Ascending aorta (tissue), 2 donors: ENCODE measurements at regions of chr19 and their contacts with region 1.

Region 1: DNA sequence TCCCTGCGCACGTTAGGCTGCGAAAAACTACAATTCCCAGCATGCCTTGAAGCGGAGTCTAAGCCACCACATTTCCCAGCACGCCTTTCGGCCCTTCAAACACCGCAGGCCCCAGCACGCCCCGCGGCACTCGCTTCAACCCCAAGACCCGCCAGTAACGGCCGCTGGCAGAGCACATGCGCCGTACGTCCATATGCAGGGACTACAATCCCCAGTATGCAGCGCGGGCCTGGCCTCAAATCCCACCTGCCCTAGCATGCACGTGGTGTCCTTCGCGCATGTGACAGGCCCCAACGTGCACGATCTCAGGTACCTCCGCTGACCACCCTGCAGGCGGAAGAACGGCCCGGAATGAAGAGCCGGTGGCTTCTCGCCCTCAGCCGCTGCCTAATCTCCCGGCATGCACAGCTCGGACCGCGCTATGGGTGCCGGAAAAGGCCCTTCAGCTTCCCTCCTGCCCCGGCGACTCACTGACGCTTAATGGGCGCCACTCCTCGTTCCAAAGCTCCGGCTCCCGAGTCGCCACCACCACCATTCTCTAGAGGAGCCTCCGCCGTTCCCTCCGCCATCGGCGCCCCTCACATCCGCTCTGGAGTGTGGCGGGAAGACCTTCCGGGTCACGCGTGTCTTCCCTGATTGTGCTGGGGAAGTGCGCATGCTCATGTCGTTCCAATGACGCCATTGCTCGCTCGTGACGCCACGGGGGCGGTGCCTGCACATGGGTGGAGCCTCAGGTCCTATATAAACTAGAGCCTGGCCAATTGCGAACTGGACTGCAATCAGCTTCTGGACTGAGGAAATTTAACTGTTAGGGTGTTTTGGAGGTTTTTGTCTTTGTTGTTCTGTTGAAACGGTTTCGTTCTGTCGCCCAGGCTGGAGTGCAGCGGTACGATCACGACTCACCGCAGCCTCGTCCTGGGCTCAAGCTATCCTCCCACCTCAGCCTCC is at the start of gene DUS3L:
- DNase-seq: peak; percentile 89 to 99
- H3K4me3 ChIP-seq: peak within 1 kb of the TSS; percentile 63 to 77
- H3K27ac ChIP-seq: peak within 1 kb of the TSS; percentile 86 to 97
- H3K4me1 ChIP-seq: peaks cover 3 to 5% of the 10 kb centered on the region in 2 donors
- H3K27me3 ChIP-seq: no peaks in the 10 kb centered on the region
- CTCF ChIP-seq: no peak
- total RNA-seq, gene DUS3L: 13.1 TPM

Region 2: GRCh38 chr19:5466814-5467291 is 324.0 kb before region 1 on chr19:
- intact Hi-C with region 1: no loop called
- DNase-seq: no peak
- H3K4me3 ChIP-seq: no peak overlapping the region
- H3K27ac ChIP-seq: no peak overlapping the region
- H3K4me1 ChIP-seq: no peaks in the 10 kb centered on the region
- H3K27me3 ChIP-seq: no peaks in the 10 kb centered on the region
- CTCF ChIP-seq: no peak

Region 3: DNA sequence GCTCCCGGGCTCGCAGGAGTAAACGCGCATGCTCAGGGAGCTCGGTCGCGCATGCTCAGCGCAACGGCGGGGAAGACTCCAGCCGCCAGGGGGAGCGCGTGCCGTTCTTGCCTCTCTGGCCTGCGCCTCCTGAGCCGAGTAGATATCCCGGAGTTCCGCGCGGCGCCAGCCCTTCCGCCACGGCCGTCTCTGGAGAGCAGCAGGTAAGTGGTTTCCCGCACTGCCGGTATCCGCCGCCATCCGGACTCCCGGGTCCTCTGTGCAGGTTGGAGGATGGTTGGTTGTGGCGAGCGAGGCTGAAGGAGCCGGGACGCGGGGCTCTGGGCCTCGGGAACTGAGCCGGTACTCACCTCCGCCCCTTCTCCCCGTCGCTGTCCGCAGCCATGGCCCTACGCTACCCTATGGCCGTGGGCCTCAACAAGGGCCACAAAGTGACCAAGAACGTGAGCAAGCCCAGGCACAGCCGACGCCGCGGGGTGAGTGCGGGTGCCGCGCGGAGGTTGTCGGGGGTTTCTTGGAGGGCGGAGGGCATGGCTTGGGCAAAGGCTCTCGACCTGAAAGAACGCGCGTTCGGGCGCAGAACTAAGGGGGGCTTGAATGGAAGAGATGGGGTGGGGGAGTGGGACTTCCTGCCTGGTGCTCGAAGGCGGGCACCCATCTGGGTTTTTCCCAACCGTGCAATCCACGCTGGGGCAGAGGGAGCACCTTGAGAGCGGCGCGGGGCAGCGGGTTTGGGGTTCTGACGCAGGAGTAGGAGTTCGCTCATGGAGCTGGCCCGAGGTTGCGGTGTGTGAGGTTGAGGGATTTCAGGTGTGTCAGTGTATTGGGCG is 100.5 kb before region 1 on chr19 and contains the start of gene RPL36:
- intact Hi-C with region 1: loop called (anchors 1 kb)
- DNase-seq: peak; percentile 84 to 99
- H3K4me3 ChIP-seq: peak within 1 kb of the TSS; percentile 65 to 70
- H3K27ac ChIP-seq: peak within 1 kb of the TSS; percentile 85 to 88
- H3K4me1 ChIP-seq: peaks cover 5 to 13% of the 10 kb centered on the region in 2 donors
- H3K27me3 ChIP-seq: no peaks in the 10 kb centered on the region
- CTCF ChIP-seq: peak; percentile 94 to 98 (median 95)
- total RNA-seq, gene RPL36: 885 TPM

Region 4: DNA sequence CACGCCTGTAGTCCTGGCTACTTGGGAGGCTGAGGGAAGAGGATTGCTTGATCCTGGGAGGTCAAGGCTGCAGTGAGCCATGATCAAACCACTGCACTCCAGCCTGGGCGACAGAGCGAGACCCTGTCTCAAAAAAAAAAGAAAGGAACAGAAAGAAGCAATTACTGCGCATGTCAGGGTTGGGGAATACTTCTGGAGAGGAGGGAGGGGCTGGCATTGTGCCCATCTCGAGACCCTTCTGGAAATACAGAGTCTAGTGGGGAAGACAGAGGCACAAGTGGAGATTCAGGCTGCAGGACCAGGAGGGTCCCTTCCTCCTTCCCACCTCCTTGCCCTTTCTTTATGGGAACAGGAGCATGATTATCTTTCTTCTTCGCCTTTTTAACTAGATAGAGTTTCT is 37.1 kb before region 1 on chr19:
- intact Hi-C with region 1: no loop called
- DNase-seq: no peak
- H3K4me3 ChIP-seq: no peak overlapping the region
- H3K27ac ChIP-seq: no peak overlapping the region
- H3K4me1 ChIP-seq: no peaks in the 10 kb centered on the region
- H3K27me3 ChIP-seq: no peaks in the 10 kb centered on the region
- CTCF ChIP-seq: no peak

Region 5: DNA sequence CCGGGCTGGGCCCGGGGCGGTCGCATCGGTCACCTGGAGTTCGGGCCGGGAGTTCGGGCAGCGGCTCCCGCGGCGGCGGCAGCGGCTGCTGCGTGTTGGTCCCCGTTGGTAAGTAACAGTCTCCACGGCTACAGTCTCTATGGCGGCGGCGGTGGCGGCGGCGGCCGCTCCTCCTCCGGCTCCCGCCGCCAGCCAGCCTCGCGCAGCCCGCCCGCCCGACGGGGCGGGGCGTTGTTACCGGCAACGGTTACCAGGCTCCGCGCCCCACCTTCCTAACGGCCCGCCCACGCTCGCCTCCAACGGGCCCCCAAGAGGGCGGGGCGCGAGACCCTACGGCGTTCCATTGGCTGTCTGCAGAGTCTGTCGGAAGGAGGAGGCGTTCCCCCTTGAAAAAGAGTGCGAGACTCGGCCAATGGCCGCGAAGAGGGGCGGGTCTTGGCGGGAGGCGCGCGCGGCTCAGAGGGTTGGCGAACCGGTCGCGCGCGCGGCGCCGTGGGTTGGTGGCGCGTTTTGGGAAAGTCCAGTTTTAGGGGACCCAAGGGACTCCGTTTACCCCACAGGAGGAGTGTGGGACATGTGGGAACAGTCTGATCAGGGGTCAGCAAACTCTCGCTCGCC is 319.6 kb after region 1 on chr19 and contains the start of gene RFX2:
- intact Hi-C with region 1: no loop called
- DNase-seq: peak; percentile 98 to 100
- H3K4me3 ChIP-seq: peak within 1 kb of the TSS; percentile 95 to 97
- H3K27ac ChIP-seq: peak within 1 kb of the TSS; percentile 90 to 94
- H3K4me1 ChIP-seq: peaks cover 3 to 4% of the 10 kb centered on the region in 2 donors
- H3K27me3 ChIP-seq: no peaks in the 10 kb centered on the region
- CTCF ChIP-seq: no peak
- total RNA-seq, gene RFX2: 107 TPM